MCF 10A (cell line): ENCODE measurements at regions of chr2 and their contacts with region 1.

Region 1: DNA sequence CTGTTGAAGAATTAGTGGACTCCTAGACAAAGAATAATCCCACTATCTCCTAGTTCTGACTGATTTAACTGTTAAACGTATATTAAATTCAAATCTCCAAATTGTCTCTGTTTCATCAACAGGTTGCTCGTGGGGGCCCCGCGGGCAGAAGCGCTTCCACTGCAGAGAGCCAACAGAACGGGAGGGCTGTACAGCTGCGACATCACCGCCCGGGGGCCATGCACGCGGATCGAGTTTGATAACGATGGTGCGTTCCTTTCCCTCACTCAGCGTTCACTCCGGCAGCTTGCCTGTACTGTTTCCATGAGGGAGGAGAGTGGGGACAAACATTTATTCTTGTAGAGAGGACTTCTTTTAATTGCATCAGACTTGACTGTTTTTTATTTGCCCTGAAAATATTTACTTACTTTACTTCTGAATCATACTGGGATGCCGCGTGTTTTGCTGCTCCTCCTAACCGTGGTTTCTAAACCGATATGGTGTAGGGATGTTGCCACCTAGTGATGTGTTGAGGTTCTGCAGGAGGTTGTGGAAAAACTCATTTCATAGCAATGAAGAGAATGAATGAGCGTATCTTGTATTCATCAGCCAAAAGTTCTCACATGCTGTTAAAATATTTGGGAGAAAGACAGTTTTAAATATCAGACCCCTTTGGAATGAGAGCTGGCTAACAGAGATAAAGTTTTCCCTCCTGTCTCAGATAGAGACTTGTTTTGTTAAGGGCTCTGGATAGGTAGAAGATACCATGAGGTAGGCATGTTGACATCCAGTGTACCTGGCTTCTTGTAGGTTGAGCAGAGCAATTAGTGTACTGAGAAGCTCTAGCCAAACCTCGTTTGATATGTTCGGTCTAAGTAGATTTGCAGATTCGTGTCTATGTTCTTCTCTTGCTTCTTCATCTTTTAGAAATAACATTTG is 38.3 kb downstream of the ITGA6 start:
- DNase-seq: peak; percentile 82
- H3K4me3 Mint-ChIP-seq: peak overlapping the region; percentile 38
- H3K27ac Mint-ChIP-seq: peak overlapping the region; percentile 95
- H3K4me1 Mint-ChIP-seq: peaks cover 58% of the 10 kb centered on the region
- H3K27me3 Mint-ChIP-seq: no peaks in the 10 kb centered on the region
- CTCF ChIP-seq: peak; percentile 87

Region 2: GRCh38 chr2:171957061-171957460 is 508.6 kb before region 1 on chr2:
- CTCF ChIA-PET with region 1: no interaction called
- POLR2A ChIA-PET with region 1: no interaction called
- intact Hi-C with region 1: loop called (anchors 10 kb)
- DNase-seq: peak; percentile 27
- H3K4me3 Mint-ChIP-seq: no peak overlapping the region
- H3K27ac Mint-ChIP-seq: no peak overlapping the region
- H3K4me1 Mint-ChIP-seq: peaks cover 36% of the 10 kb centered on the region
- H3K27me3 Mint-ChIP-seq: no peaks in the 10 kb centered on the region
- CTCF ChIP-seq: no peak

Region 3: GRCh38 chr2:172200495-172201085 is 265.1 kb before region 1 on chr2:
- CTCF ChIA-PET with region 1: interaction called, 14 read pairs
- POLR2A ChIA-PET with region 1: interaction called, 33 read pairs
- intact Hi-C with region 1: loop called (anchors 10 kb)
- DNase-seq: peak; percentile 51
- H3K4me3 Mint-ChIP-seq: no peak overlapping the region
- H3K27ac Mint-ChIP-seq: peak overlapping the region; percentile 49
- H3K4me1 Mint-ChIP-seq: peaks cover 30% of the 10 kb centered on the region
- H3K27me3 Mint-ChIP-seq: no peaks in the 10 kb centered on the region
- CTCF ChIP-seq: peak; percentile 41

Region 4: GRCh38 chr2:172246649-172247048 is 219.0 kb before region 1 on chr2:
- CTCF ChIA-PET with region 1: interaction called, 31 read pairs
- POLR2A ChIA-PET with region 1: interaction called, 8 read pairs
- intact Hi-C with region 1: no loop called
- DNase-seq: peak; percentile 57
- H3K4me3 Mint-ChIP-seq: no peak overlapping the region
- H3K27ac Mint-ChIP-seq: peak overlapping the region; percentile 100
- H3K4me1 Mint-ChIP-seq: peaks cover 68% of the 10 kb centered on the region
- H3K27me3 Mint-ChIP-seq: no peaks in the 10 kb centered on the region
- CTCF ChIP-seq: no peak

Region 5: DNA sequence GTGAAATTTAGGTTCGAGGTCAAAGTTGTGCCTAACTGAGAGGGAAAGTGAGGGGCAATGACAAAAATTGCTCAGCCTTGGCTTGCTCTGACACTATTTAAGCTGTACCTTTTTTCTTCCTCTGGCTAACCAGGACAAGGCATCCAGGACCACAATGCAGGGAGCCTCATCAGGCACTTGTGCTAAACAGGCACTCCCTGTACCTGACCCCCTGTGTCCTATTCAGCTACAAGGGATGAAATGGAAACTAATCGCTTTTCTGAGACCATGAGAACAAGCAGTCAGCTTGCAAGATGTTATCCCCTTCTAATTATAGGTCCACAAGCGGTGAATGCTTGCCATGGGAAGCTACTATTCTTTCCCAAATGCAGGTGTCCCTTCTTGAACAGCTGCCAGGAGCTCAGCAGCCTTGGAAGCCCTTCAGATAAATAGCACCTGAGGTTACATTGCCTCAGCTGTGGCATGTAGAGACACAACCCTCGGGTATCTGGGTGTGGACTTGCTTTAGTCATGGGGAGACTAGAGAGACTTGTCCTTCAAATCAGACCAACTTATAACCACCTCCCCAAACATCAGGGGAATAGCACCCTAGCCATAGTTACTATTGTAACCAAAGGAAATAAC is 57.4 kb before region 1 on chr2:
- CTCF ChIA-PET with region 1: interaction called, 18 read pairs
- POLR2A ChIA-PET with region 1: interaction called, 23 read pairs
- intact Hi-C with region 1: no loop called
- DNase-seq: peak; percentile 97
- H3K4me3 Mint-ChIP-seq: peak overlapping the region; percentile 22
- H3K27ac Mint-ChIP-seq: peak overlapping the region; percentile 88
- H3K4me1 Mint-ChIP-seq: peaks cover 37% of the 10 kb centered on the region
- H3K27me3 Mint-ChIP-seq: no peaks in the 10 kb centered on the region
- CTCF ChIP-seq: no peak

Region 6: DNA sequence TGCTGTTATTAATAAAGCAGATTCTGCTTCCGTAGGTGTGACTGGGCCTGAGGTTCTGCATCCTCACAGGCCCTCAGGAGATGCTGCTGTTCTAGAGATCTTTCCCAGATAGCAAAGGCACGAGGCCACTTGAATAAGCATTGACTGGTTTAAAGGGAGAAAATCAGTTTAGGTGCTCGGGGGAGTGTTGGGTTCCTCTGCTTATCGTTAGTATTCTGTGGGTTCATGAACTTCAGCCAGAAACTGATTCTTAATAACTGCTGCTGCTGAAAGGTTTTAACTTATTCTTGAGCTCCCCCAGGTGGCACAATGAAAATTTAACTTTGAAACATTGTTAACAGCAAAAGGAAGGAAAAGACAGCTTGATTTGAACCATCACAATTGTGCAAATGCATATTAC is 18.6 kb after region 1 on chr2:
- CTCF ChIA-PET with region 1: interaction called, 11 read pairs
- POLR2A ChIA-PET with region 1: interaction called, 3 read pairs
- intact Hi-C with region 1: no loop called
- DNase-seq: no peak
- H3K4me3 Mint-ChIP-seq: no peak overlapping the region
- H3K27ac Mint-ChIP-seq: peak overlapping the region; percentile 3
- H3K4me1 Mint-ChIP-seq: peaks cover 13% of the 10 kb centered on the region
- H3K27me3 Mint-ChIP-seq: no peaks in the 10 kb centered on the region
- CTCF ChIP-seq: no peak